ENCODE measurements at regions of chr2 and their contacts with region 1.

Region 1: DNA sequence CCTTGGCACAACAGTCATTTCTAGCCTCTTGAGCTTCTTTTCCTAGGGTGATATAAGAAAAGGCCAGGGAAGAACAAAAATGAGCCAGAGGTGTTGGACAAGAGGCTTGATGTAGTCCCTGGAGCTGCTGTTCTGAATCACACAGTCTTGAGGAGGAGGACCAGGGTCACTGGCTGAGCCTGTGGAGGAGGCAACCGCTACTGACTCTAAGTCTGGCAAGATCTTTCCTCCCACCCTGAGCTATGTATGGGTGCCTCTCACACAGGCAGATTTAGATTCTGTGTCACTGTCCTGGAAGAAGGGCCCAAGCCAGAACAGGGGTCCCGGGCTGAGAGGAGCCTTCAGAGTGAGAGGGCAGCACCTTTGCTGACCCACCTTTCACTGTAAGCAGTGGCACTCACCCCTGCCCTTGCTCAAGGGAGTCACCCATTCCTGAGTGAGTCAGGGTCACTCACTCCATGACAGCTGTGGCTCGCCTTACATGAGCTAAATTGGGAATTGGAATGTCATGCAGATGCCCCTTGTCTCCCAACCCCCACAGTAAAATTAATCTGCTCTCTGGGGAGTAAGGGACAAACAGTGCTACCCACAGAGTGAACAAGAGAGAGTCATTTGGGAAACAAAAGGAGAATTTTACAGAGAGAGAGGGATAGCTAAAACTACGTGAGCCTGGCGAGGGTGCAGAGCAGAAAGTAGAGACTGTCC is at the start of gene TRIM54:
- DNase-seq: no peak
- ATAC-seq: peak; percentile 87
- total RNA-seq, gene TRIM54: 282 TPM

Region 2: DNA sequence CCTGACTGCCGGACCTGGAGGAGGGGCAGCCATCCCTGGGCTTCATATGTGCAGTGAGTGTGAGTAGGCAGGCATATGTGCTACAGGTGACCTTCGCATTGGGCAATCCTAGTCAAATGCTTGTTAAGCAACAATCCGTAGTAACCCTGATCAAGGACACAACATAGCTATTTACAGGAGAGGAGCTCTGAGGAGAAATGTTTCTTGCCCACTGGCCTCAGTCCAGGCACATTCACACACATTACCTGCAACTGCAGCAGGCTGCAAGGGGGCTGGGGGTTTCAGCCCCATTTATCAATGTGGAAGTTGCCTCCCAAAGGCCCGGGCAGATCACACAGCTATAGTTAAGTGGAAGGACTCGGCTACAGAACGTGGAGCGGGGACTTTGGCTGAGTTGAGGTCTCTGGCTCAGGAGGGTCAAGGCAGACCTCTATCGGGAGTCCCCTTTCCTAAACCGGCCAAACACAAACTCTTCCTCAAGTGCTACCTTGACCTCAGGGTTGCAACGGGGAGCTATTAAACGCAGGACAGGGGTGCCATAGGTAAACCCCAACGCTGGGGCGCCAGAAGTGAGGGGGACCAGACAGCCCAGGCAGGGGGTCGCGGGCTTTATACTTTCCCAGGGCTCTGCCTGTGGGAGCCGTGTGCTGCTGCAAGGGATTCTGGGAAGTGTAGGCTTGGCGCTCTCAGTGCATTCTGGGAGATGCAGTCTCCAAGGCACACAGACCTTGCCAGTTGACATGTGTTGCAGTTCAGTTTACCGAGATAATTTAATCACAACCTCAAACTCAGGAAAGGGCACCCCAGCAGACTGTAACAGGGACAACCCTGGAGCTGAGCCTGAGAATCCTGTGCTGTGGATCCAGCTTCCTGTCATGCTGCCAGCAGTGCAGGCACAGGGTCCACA is 186.0 kb before region 1 on chr2:
- intact Hi-C with region 1: loop called (anchors 5 kb)
- DNase-seq: peak; percentile 75
- ATAC-seq: peak; percentile 88

Region 3: DNA sequence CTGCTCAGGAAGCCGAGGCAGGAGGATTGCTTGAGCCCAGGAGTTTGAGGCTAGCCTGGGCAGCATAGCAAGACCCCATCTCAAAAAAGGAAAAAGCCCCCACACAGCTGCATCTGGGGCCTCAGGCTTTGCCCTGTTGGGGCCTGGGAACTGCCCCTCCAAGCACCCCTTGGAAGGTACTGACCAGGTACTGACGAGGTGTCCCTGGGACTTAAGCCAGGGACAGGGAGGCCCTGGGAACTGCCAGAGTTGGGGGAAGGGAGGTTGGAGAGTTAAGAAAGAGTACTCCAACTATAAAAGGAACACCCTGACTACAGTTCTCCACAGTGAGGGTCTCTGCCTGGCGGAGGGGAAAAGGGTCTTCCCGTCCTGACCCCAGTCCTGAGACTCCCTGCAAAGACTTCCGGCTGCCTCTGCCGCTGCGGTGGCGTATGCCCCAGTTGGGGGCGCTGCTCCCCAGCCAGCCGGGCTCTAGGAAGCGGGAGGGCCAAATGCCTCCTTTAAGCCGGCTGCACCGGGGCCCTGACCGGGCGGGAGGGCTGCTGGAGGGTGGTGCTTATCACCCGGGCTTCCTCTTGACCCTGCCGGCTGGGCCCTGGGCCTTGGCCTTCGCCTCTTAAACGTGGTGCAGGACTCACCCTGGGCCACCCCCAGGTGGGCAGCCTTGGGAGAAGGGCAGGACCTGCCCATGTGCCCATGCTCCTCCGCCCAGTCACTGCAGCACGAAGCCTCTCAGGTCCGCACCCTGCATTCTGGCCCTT is 31.9 kb before region 1 on chr2:
- intact Hi-C with region 1: loop called (anchors 1 kb)
- DNase-seq: peak; percentile 78
- ATAC-seq: peak; percentile 58

Region 4: DNA sequence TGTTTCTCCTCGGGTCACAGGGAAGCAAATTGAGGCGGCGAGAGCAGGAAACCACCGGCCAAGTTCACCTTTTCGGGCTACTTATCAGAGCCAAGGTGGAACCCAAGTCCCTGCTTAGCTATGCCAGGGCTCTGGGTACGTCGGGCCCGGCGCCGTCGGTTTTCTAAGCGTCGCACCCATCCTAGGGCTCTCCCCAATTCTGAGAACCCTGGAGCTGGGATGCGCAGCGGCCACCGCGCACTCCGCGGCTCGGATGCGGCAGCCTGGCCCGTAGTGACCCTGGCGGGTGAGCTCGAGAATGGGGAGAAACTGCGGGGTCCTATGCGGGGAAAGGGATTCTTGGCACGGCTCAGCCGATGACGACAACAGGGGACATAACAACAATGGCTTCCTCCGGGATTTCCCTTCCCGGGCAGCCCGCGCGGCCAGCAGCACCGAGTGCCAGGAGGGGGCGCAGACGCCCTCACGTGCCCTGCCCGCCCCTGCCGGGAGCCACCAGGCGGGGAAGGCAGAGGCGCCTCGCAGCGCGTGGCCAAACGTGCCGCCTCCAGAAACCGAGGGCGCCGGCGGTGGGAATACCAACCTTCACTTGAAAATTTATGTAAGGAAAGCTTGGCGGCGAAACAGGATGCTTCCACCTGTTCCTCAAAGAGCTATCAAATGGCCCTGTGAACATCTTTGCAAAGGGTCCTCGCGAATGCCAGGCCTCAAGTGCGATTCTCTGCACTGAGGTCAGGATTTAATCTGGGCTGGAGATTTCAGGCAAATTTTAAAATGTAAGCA is 17.1 kb before region 1 on chr2:
- intact Hi-C with region 1: loop called (anchors 2 kb)
- DNase-seq: peak; percentile 81
- ATAC-seq: peak; percentile 75

Region 5: DNA sequence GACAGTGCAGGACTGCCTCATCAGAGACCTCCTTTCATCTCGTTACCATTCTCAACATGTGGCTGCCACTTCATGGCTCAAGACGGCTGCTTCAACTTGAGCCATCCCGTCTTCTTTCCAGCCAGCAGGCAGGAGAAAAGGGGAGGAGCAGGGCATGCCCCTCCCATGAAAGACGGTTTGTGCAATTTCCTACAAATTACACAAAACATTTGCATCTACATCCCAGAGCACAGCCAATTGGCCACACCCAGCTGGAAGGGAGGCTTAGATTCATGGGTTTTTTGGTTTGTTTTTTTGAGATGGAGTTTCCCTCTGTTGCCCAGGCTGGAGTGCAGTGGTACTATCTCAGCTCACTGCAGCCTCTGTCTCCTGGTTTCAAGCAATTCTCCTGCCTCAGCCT is 14.5 kb after region 1 on chr2:
- intact Hi-C with region 1: no loop called
- DNase-seq: no peak
- ATAC-seq: no peak

Region 6: DNA sequence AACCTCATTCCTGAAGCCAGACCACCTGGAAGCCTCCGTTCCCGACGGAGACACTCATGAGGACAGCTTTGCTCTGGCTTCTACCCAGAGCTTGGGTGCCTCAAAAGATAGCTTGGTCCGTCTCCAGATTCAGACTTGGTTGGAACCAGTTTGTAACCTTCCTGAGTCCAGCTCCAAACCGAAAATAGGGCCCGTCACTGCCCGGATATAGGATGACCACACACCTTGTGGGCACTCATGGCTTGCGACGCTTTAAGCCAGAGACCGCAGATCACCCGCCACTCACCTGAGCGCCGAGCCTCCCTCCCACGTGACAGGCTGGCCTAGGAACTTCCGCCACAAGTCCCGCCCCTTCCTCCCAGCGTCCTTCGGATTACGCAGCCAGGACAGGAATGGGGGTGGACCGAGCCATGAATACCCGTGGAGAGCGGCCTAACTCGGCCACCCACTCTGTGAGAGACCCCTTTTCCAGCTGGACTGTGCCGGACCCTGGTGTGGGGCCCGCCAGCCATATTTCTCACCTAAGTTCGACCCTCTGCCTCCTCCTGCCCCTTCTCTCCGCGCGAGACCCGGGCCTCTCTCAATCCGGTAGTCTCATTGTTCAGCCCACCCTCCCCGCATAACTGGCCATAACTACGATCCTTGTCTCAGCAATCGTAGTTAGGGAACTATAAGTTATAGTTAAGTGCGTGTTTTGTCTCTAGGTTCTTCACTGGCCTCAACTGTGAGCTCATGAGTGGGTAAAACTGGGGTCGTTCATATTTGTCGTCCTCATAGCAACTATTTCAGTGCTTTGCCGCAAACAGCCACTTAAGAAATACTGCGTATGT is 41.0 kb after region 1 on chr2 and contains the start of gene MPV17:
- intact Hi-C with region 1: loop called (anchors 1 kb)
- DNase-seq: peak; percentile 95
- ATAC-seq: peak; percentile 96
- total RNA-seq, gene MPV17: 48.0 TPM

Measured in Right ventricle myocardium inferior (tissue), 1 donor.